ENCODE measurements at regions of chr16 and their contacts with region 1.

Region 1: DNA sequence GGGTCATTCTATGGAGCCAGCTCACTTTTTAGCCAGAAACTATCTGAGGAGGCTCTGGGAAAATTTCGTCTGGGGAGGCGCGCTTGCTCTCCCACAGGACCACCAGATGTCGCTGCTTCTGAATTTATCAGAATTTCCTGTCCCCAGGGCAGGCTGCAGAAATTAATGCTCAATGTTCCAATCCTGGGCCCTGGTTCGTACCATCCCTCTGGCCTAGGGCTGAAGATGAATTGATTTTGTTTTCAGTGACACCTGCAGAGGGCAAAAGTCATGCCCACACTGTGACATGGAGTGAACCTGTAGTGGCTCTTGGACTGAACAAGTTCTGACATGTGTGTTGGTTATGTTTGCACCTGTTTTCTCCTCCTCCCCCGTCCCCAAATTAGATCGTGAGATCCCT is 482.6 kb downstream of the NPIPA7 start:
- DNase-seq: peak; percentile 40 to 57
- H3K4me3 ChIP-seq: no peak overlapping the region
- H3K4me3 Mint-ChIP-seq: no peak overlapping the region
- H3K27ac Mint-ChIP-seq: no peak overlapping the region
- H3K4me1 ChIP-seq: no peaks in the 10 kb centered on the region
- H3K4me1 Mint-ChIP-seq: no peaks in the 10 kb centered on the region
- H3K27me3 ChIP-seq: no peaks in the 10 kb centered on the region
- H3K27me3 Mint-ChIP-seq: peaks cover under 1% of the 10 kb centered on the region
- CTCF ChIP-seq: peak; percentile 70 to 76

Region 2: DNA sequence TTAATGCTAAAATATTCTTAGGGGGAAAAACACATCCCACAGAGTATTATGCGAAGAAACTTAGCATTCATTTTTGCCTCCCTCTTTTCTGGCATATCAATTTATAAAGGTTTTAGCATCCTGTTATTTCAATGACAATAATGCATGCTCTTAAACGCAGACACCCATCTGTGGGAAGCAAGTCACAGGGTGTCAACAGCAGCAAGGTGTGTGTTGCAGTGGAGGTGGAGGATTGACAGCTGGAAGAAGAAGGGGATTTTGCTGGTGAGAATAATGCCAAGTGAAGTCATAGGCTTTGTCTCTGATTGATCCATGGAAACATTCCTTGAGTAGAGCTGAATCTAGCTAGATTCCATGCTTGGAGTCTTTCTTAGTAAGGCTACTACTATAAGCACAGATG is 15.5 kb after region 1 on chr16:
- CTCF ChIA-PET with region 1: no interaction called
- POLR2A ChIA-PET with region 1: no interaction called
- intact Hi-C with region 1: no loop called
- DNase-seq: no peak
- H3K4me3 ChIP-seq: no peak overlapping the region
- H3K4me3 Mint-ChIP-seq: no peak overlapping the region
- H3K27ac Mint-ChIP-seq: no peak overlapping the region
- H3K4me1 ChIP-seq: no peaks in the 10 kb centered on the region
- H3K4me1 Mint-ChIP-seq: no peaks in the 10 kb centered on the region
- H3K27me3 ChIP-seq: no peaks in the 10 kb centered on the region
- H3K27me3 Mint-ChIP-seq: peaks cover 18% of the 10 kb centered on the region
- CTCF ChIP-seq: no peak

Region 3: DNA sequence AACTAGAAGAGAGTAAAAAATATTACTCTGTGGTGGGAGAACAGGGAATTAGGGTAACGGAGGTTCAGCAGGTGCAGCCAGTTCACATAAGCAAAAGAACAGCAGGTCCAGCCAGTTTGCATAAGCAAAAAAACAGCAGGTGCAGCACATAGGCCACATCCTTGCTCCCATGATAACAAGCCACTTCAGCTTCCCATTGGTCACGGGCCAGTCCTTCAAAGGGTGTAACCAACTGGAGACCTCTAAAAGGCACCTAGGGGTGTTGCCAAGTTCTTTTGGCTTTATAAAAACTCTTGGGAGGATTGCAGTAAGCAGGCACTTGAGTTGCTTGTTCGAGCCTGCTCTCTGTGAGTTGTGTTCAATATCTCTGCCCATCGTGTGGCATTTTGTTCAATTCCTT is 121.1 kb after region 1 on chr16:
- CTCF ChIA-PET with region 1: no interaction called
- POLR2A ChIA-PET with region 1: no interaction called
- intact Hi-C with region 1: no loop called
- DNase-seq: no peak
- H3K4me3 ChIP-seq: no peak overlapping the region
- H3K4me3 Mint-ChIP-seq: no peak overlapping the region
- H3K27ac Mint-ChIP-seq: no peak overlapping the region
- H3K4me1 ChIP-seq: no peaks in the 10 kb centered on the region
- H3K4me1 Mint-ChIP-seq: no peaks in the 10 kb centered on the region
- H3K27me3 ChIP-seq: no peaks in the 10 kb centered on the region
- H3K27me3 Mint-ChIP-seq: no peaks in the 10 kb centered on the region
- CTCF ChIP-seq: no peak

Region 4: GRCh38 chr16:16996827-16997226 is 135.3 kb after region 1 on chr16:
- CTCF ChIA-PET with region 1: no interaction called
- POLR2A ChIA-PET with region 1: no interaction called
- intact Hi-C with region 1: loop called (anchors 1 kb)
- DNase-seq: peak in 1 of 2 experiments; percentile 25
- H3K4me3 ChIP-seq: no peak overlapping the region
- H3K4me3 Mint-ChIP-seq: no peak overlapping the region
- H3K27ac Mint-ChIP-seq: no peak overlapping the region
- H3K4me1 ChIP-seq: no peaks in the 10 kb centered on the region
- H3K4me1 Mint-ChIP-seq: peaks cover 6% of the 10 kb centered on the region
- H3K27me3 ChIP-seq: no peaks in the 10 kb centered on the region
- H3K27me3 Mint-ChIP-seq: peaks cover 7% of the 10 kb centered on the region
- CTCF ChIP-seq: peak; percentile 27 to 37

Region 5: DNA sequence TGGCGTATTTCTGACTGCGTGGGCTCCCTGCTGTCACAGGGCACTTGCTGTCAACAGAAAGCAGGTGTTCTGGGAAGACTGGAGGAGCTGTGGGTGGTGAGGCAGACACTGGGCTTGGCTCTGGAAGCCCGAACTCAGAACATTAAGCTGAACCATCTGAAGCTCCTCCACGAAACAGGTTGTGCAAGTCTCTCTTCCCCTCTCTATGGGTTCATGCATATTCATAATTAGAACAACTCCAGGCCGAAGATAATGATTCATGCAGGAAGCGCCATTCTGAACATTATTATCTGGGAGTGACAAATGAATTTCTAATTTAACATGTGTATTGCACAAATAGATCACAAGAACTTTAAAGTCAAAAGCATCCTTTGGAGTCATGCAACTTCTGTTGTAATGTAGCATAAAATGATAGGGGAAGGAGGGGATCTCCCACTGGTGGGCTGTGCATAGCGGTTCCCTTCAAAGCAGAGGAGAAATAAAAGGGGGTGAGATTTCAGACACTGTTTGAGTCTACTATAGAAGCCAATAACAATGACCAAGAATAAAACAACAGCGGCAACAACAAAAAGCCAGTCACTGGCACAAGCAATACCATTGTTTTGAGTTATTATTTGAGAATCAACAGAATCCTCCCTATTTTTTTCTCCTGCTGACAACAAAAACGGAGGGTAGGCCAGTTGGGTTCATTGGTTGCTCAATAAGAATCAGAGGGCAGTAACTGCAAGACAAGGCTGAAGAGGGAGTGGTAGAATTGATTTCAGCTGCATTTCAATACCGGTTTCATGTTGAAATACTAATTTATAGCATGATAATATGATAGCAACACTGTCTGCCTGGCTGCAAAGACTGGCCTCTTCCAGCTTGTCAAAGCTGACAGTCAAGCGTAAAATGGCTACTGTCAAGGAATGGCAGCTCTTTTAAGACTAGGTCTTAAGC is 201.9 kb after region 1 on chr16:
- CTCF ChIA-PET with region 1: no interaction called
- POLR2A ChIA-PET with region 1: no interaction called
- intact Hi-C with region 1: no loop called
- DNase-seq: no peak
- H3K4me3 ChIP-seq: no peak overlapping the region
- H3K4me3 Mint-ChIP-seq: no peak overlapping the region
- H3K27ac Mint-ChIP-seq: no peak overlapping the region
- H3K4me1 ChIP-seq: no peaks in the 10 kb centered on the region; the same call in 1 of the 2 replicates
- H3K4me1 Mint-ChIP-seq: no peaks in the 10 kb centered on the region
- H3K27me3 ChIP-seq: no peaks in the 10 kb centered on the region
- H3K27me3 Mint-ChIP-seq: no peaks in the 10 kb centered on the region
- CTCF ChIP-seq: no peak

Measured in Caco-2 (cell line).